PC-9 (cell line): ENCODE measurements at regions of chr17 and their contacts with region 1.

Region 1: GRCh38 chr17:55023626-55024025 is 55.1 kb downstream of the STXBP4 start:
- DNase-seq: no peak
- H3K4me3 ChIP-seq: no peak overlapping the region
- H3K27ac ChIP-seq: no peak overlapping the region
- H3K4me1 ChIP-seq: no peaks in the 10 kb centered on the region
- H3K27me3 ChIP-seq: no peaks in the 10 kb centered on the region
- CTCF ChIP-seq: no peak

Region 2: DNA sequence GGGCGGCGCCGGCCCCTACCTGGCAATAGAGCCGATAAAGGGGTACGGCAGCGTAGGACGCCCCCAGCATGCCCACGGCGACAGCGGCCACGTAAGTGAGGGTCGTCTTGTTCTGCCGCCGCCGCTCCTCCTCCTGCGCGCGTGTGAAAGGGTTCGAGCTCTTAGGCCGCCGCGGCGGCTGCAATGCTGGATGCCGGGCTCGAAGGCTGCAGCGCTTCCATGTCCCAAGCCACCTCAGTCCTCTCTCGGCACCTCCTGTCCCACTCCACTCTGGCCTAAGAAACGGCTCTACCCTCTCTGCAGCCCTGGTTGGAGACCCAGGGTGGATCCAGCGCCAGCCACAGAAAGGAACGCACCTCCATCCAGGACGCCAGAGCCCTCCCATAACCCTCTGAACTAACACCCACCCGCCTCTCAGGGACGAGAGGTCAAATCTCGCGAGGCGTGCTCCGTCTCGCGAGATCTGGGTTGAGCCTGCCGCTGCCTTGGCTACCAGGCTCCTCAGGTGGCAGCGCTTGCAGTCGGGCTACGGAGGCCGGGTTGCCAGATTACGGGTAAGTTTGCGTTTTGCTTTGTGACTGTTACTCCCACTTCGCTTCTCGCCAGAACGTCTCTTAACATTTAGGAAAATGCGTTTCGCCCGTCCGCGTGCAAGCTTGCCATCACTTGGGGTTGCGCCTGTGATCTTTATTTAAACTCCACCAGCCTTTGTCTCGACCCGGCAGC is 55.2 kb before region 1 on chr17 and contains the starts of genes COX11 and STXBP4:
- CTCF ChIA-PET with region 1: no interaction called
- POLR2A ChIA-PET with region 1: no interaction called
- intact Hi-C with region 1: no loop called
- DNase-seq: peak; percentile 93 to 94
- H3K4me3 ChIP-seq: peak within 1 kb of the TSS; percentile 68
- H3K27ac ChIP-seq: peak within 1 kb of the TSS; percentile 32
- H3K4me1 ChIP-seq: peaks cover 29% of the 10 kb centered on the region
- H3K27me3 ChIP-seq: no peaks in the 10 kb centered on the region
- CTCF ChIP-seq: peak; percentile 64
- total RNA-seq, gene COX11: 54.1 and 58.2 TPM in 2 replicates
- total RNA-seq, gene STXBP4: 6.2 and 12.0 TPM in 2 replicates

Region 3: DNA sequence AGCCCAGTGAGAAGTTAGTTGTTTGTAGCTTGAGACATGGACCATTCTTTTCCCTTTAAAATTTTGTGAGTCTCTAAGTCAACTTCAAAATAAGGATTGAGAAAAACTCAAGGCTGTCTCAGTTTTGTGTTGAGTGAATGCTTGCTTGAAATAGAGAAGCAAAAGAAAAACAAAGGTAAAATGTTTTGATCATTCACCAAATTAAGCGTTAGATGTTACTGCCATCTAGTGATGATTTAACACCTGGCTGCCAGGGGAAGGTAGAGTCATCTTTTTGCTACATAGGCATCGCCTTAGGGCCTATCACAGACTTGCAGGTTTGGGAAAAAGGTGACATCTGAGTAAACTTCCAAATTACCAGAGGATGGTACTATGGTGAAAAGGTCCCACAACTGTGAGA is 801.6 kb after region 1 on chr17:
- CTCF ChIA-PET with region 1: no interaction called
- POLR2A ChIA-PET with region 1: interaction called, 12 read pairs
- intact Hi-C with region 1: no loop called
- DNase-seq: no peak
- H3K4me3 ChIP-seq: no peak overlapping the region
- H3K27ac ChIP-seq: no peak overlapping the region
- H3K4me1 ChIP-seq: no peaks in the 10 kb centered on the region
- H3K27me3 ChIP-seq: peaks cover 45% of the 10 kb centered on the region
- CTCF ChIP-seq: peak; percentile 57